ENCODE measurements at regions of chr18 and their contacts with region 1.

Region 1: DNA sequence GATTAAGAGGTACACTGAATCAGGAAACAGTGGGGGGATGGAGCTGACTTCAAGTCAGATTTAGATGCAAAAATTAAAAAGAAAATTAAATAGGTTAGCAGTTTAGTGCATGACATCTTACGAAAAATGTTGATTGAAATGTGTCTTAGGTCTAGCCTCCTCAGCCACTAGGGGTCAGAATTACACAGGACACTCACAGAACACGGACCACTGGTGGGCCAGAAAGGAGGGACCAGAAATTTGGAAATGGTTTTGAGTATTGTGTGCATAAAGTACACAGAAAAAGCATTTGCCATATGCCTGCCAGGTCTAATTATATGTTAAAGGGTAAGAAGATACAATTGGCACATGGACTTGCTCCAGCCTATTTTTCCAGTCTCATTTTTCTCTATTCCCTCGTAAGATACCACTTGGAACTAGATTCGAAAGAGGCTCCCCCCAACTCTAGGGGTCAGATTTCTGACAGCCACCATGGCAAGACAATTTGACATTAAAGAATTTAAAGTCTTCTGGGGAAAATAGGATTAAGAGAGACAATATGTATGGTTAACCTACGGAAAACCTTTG is 550.2 kb upstream of the SETBP1 start:
- DNase-seq: peak; percentile 25 to 34
- H3K4me3 ChIP-seq: no peak overlapping the region
- H3K27ac ChIP-seq: no peak overlapping the region
- H3K4me1 ChIP-seq: no peaks in the 10 kb centered on the region
- H3K27me3 ChIP-seq: no peaks in the 10 kb centered on the region
- CTCF ChIP-seq: peak; percentile 23 to 88 (median 70)
- POLR2A ChIP-seq: no peak

Region 2: GRCh38 chr18:44325903-44326635 is 195.6 kb after region 1 on chr18:
- intact Hi-C with region 1: loop called (anchors 5 kb)
- DNase-seq: peak; percentile 82 to 89
- H3K4me3 ChIP-seq: no peak overlapping the region
- H3K27ac ChIP-seq: no peak overlapping the region
- H3K4me1 ChIP-seq: no peaks in the 10 kb centered on the region
- H3K27me3 ChIP-seq: no peaks in the 10 kb centered on the region
- CTCF ChIP-seq: peak; percentile 34 to 75 (median 60)
- POLR2A ChIP-seq: no peak